ENCODE measurements at regions of chr1 and their contacts with region 1.

Region 1: GRCh38 chr1:192170196-192170984 is 12.1 kb downstream of the RGS18 start:
- DNase-seq: no peak
- H3K4me3 ChIP-seq: no peak overlapping the region
- H3K27ac ChIP-seq: no peak overlapping the region
- H3K4me1 ChIP-seq: no peaks in the 10 kb centered on the region
- H3K27me3 ChIP-seq: no peaks in the 10 kb centered on the region
- CTCF ChIP-seq: no peak

Region 2: DNA sequence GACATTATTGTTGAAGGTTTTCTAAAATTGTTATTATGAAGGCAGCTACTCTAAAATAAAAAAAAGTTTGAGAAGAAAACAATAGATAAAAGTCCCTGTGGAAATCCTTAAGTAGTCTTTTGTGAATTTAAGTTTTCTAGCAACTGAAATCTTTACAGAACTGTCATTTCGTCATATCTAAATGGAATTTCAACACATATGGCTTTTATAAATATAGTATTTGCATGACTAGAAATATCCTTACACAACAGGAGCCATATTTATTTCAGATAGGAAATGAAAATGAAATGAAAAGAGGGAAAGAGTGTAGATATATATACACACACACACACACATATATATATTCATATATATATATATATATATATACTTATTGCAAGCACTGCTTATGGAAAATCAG is 216.9 kb before region 1 on chr1:
- intact Hi-C with region 1: loop called (anchors 5 kb)
- DNase-seq: no peak
- H3K4me3 ChIP-seq: no peak overlapping the region
- H3K27ac ChIP-seq: no peak overlapping the region
- H3K4me1 ChIP-seq: no peaks in the 10 kb centered on the region
- H3K27me3 ChIP-seq: no peaks in the 10 kb centered on the region
- CTCF ChIP-seq: no peak

Region 3: GRCh38 chr1:192243721-192244120 is 73.3 kb after region 1 on chr1:
- intact Hi-C with region 1: no loop called
- DNase-seq: no peak
- H3K4me3 ChIP-seq: no peak overlapping the region
- H3K27ac ChIP-seq: no peak overlapping the region
- H3K4me1 ChIP-seq: no peaks in the 10 kb centered on the region
- H3K27me3 ChIP-seq: no peaks in the 10 kb centered on the region
- CTCF ChIP-seq: no peak

Region 4: DNA sequence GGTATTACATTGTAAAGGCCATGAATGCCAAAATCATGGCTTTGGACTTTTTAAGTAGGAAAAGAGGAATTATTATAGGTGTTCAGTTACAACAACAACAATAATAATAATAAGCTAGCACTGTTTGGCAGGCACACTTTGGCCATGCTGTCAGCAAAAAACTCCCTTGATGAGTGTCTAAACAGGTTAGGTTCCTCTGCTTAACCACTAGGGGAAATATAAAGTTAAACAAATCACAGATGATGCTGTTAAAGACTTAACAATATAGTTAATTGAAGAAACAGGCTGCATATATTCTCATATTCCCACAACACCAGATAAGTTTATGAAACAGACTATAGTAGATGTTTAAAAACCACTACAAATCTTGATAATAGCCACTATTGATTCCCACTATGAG is 192.8 kb after region 1 on chr1:
- intact Hi-C with region 1: no loop called
- DNase-seq: no peak
- H3K4me3 ChIP-seq: no peak overlapping the region
- H3K27ac ChIP-seq: no peak overlapping the region
- H3K4me1 ChIP-seq: no peaks in the 10 kb centered on the region
- H3K27me3 ChIP-seq: no peaks in the 10 kb centered on the region
- CTCF ChIP-seq: no peak

Measured in left ventricle myocardium inferior (tissue), 1 donor.